ENCODE measurements at regions of chr4 and their contacts with region 1.

Region 1: GRCh38 chr4:154982187-154983047 is 201.3 kb downstream of the RBM46 start:
- DNase-seq: peak; percentile 69
- ATAC-seq: peak; percentile 88
- H3K4me3 ChIP-seq: no peak overlapping the region
- H3K27ac ChIP-seq: no peak overlapping the region
- H3K4me1 ChIP-seq: no peaks in the 10 kb centered on the region
- H3K27me3 ChIP-seq: no peaks in the 10 kb centered on the region
- CTCF ChIP-seq: peak; percentile 81

Region 2: DNA sequence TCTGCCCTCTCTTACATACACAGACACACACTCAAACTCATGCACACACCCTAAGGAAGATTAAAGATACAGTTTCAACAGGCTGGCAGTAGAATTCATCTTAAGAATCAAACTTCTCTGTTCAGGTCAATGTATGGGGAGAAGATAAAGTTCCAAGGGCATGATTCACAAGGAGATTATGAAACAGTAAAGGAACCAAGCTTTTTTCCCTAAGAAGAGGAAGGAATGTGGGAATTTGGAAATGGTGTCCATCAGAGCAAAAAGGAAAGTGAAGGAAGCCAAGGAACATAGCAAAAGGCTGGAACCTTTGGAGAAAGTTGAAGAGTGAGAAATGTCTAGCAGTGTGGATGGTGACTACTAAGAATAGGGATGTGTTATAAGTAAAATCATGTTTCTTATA is 35.0 kb after region 1 on chr4:
- CTCF ChIA-PET with region 1: no interaction called
- POLR2A ChIA-PET with region 1: no interaction called
- intact Hi-C with region 1: no loop called
- DNase-seq: no peak
- ATAC-seq: no peak
- H3K4me3 ChIP-seq: no peak overlapping the region
- H3K27ac ChIP-seq: no peak overlapping the region
- H3K4me1 ChIP-seq: no peaks in the 10 kb centered on the region
- H3K27me3 ChIP-seq: no peaks in the 10 kb centered on the region
- CTCF ChIP-seq: no peak

Region 3: DNA sequence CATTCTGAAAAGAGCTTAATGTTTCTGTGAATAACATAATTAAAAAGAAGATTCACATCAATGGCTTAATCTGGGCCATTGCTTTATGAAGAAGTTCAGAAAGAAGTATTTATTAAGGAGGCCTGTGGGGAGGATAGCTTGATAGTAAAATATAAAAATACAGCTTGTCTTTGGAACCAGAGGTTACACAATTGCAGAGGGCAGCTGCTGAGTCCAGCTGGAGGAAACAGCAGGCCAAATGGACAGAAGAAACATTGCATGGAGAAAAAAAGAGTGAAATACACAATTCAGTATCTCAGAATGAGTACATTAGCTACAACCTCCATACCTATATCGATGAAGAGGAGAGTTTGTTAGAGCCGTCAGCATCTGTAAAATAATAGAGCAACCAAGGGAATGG is 78.0 kb after region 1 on chr4:
- CTCF ChIA-PET with region 1: no interaction called
- POLR2A ChIA-PET with region 1: no interaction called
- intact Hi-C with region 1: no loop called
- DNase-seq: no peak
- ATAC-seq: no peak
- H3K4me3 ChIP-seq: no peak overlapping the region
- H3K27ac ChIP-seq: no peak overlapping the region
- H3K4me1 ChIP-seq: no peaks in the 10 kb centered on the region
- H3K27me3 ChIP-seq: no peaks in the 10 kb centered on the region
- CTCF ChIP-seq: no peak

Region 4: DNA sequence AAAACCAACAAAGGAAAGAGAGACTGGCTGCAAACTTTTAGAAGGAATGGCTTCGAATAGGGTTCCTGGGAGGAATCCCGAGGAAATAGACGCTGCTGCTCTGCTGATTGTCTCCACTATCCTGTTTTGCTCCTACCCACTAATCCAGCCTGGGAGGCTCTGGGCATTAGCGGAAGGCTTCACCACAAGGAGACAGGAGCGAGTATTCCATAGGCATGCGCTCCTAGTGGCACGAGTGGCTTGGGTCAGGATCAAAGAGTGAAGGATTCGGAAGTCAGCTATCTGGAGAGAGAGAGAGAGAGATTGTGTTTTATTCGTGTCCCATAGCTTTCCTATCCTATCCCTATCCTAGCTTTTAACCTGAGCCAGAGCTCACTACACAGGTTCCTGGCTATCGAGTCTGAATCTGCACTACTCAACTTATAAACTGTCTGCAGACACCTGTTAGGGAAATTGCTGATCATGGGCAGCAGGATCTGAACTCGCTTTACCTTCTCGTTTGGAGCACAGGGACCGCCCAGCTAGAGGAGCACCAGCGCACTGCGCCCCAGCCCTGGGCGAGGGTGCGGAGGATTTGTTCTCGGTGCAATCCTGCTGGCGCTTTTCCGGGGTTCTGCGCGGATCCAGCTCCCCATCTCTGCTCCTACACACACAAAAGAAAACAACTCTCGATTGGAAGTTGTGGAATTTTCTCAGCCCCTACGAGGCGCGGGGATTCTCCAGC is 225.3 kb after region 1 on chr4:
- CTCF ChIA-PET with region 1: no interaction called
- POLR2A ChIA-PET with region 1: no interaction called
- intact Hi-C with region 1: loop called (anchors 1 kb)
- DNase-seq: peak; percentile 64
- ATAC-seq: peak; percentile 89
- H3K4me3 ChIP-seq: peak overlapping the region; percentile 68
- H3K27ac ChIP-seq: no peak overlapping the region
- H3K4me1 ChIP-seq: no peaks in the 10 kb centered on the region; the same call in 1 of the 2 replicates
- H3K27me3 ChIP-seq: peaks cover 22% of the 10 kb centered on the region; the same call in 1 of the 2 replicates
- CTCF ChIP-seq: peak; percentile 47

Region 5: GRCh38 chr4:155353923-155354540 is 371.6 kb after region 1 on chr4:
- CTCF ChIA-PET with region 1: interaction called, 3 read pairs
- POLR2A ChIA-PET with region 1: no interaction called
- intact Hi-C with region 1: loop called (anchors 1 kb)
- DNase-seq: peak; percentile 73
- ATAC-seq: peak; percentile 84
- H3K4me3 ChIP-seq: no peak overlapping the region
- H3K27ac ChIP-seq: no peak overlapping the region
- H3K4me1 ChIP-seq: no peaks in the 10 kb centered on the region
- H3K27me3 ChIP-seq: no peaks in the 10 kb centered on the region
- CTCF ChIP-seq: peak; percentile 86

Region 6: DNA sequence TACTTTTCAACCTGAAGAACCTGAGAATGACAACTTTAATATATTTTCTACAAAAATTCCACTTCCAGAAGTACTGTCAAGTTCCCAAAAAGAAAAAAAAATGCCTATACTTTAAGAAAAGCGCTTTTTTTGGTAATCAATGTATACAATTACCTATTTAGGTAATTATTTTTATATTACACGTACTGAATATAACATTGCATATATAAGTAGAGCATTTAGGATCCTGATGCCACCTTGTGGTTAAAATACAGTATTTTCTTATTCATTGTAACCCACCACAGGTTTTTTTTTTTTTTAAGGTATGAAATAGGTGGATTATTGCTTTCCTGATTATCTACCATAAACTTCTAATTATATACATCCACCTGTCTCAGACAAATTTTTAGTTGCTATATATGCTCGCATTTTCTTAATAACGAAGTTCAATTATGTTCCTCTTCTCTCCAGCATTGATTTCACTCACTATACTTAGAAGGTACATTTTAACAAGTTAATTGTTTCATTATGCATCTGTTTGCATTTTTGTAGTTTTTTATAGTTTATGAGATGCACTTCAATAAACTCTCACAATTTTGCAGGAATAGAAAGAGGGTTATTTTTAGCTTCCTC is 389.1 kb after region 1 on chr4:
- CTCF ChIA-PET with region 1: no interaction called
- POLR2A ChIA-PET with region 1: no interaction called
- intact Hi-C with region 1: loop called (anchors 1 kb)
- DNase-seq: peak; percentile 61
- ATAC-seq: 0 out of 2 replicates have a peak, but pooled peaks have one; percentile 25
- H3K4me3 ChIP-seq: no peak overlapping the region
- H3K27ac ChIP-seq: no peak overlapping the region
- H3K4me1 ChIP-seq: peaks cover 14% of the 10 kb centered on the region
- H3K27me3 ChIP-seq: no peaks in the 10 kb centered on the region
- CTCF ChIP-seq: peak; percentile 59

Measured in PC-3 (cell line).